Activated naive CD4-positive, alpha-beta T cell treated with anti-CD3 and anti-CD28 coated beads for 36 hours (primary cell): ENCODE measurements at regions of chr2 and their contacts with region 1.

Region 1: DNA sequence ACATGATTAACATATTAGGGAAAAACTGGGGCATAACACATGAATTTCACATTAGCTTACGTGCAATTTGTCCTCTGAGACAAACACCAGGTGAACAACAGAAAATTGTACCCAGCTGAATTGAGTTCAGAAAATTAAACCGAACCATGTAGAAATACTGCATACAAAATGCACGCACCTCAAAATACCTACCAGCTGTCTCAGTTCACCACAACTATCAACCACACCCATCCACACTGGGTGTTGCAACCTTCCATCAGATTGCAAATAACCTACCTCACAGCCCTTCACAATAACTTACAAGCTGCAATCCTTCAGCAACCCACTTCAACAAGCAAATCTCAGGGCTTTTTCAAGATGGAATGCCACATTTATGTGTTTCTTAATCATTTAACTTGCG is 55.9 kb downstream of the UNC50 start:
- DNase-seq: peak; percentile 78
- H3K4me3 Mint-ChIP-seq: peak overlapping the region; percentile 52
- H3K27ac Mint-ChIP-seq: peak overlapping the region; percentile 95
- H3K4me1 Mint-ChIP-seq: peaks cover 77% of the 10 kb centered on the region
- H3K27me3 Mint-ChIP-seq: no peaks in the 10 kb centered on the region

Region 2: GRCh38 chr2:98465456-98466226 is 198.7 kb before region 1 on chr2:
- CTCF ChIA-PET with region 1: no interaction called
- intact Hi-C with region 1: no loop called
- DNase-seq: peak; percentile 83
- H3K4me3 Mint-ChIP-seq: peak overlapping the region; percentile 66
- H3K27ac Mint-ChIP-seq: peak overlapping the region; percentile 95
- H3K4me1 Mint-ChIP-seq: peaks cover 88% of the 10 kb centered on the region
- H3K27me3 Mint-ChIP-seq: no peaks in the 10 kb centered on the region

Region 3: DNA sequence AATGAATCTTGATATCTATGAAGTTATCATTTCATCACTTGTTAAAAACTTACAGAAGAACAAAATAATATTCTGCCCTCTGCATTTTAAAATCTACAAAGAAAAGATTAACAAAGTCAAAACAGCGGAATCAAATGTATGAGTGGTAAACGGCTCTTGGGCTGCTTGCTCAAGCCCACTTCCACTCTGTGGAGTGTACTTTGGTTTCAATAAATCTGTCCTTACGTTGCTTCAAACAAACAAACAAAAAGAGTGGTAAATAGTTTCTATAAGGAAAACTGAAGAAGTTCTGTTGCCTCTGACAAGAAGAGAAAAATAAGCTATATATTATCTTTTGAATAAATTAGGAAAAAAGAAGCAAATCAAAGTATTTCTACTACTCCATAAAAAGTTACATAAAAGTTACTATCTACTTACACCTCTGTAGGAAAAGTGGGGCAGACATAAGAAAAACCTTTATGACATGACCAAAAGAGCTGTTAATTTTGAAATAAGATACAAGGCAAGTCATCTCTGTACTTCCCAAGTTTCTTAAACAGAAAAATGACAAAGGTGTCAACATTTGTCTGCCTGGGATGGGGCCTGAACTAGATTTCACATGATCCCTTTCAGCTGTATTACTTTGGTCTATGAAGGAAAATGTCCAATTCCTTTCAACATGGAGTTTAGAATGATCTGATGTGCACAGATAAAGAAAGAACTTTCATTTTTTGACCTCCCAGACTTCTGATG is 10.1 kb after region 1 on chr2:
- CTCF ChIA-PET with region 1: interaction called, 4 read pairs
- intact Hi-C with region 1: loop called (anchors 1 kb)
- DNase-seq: no peak
- H3K4me3 Mint-ChIP-seq: no peak overlapping the region
- H3K27ac Mint-ChIP-seq: peak overlapping the region; percentile 78
- H3K4me1 Mint-ChIP-seq: peaks cover 61% of the 10 kb centered on the region
- H3K27me3 Mint-ChIP-seq: no peaks in the 10 kb centered on the region

Region 4: GRCh38 chr2:98704499-98705332 is 40.4 kb after region 1 on chr2:
- CTCF ChIA-PET with region 1: no interaction called
- intact Hi-C with region 1: no loop called
- DNase-seq: no peak
- H3K4me3 Mint-ChIP-seq: no peak overlapping the region
- H3K27ac Mint-ChIP-seq: peak overlapping the region; percentile 43
- H3K4me1 Mint-ChIP-seq: peaks cover 74% of the 10 kb centered on the region
- H3K27me3 Mint-ChIP-seq: no peaks in the 10 kb centered on the region

Region 5: GRCh38 chr2:98869940-98870263 is 205.6 kb after region 1 on chr2:
- CTCF ChIA-PET with region 1: no interaction called
- intact Hi-C with region 1: no loop called
- DNase-seq: no peak
- H3K4me3 Mint-ChIP-seq: no peak overlapping the region
- H3K27ac Mint-ChIP-seq: no peak overlapping the region
- H3K4me1 Mint-ChIP-seq: peaks cover 11% of the 10 kb centered on the region
- H3K27me3 Mint-ChIP-seq: no peaks in the 10 kb centered on the region

Region 6: GRCh38 chr2:99154643-99155536 is 490.6 kb after region 1 on chr2 and contains the starts of genes LIPT1 and TSGA10:
- CTCF ChIA-PET with region 1: no interaction called
- intact Hi-C with region 1: no loop called
- DNase-seq: peak; percentile 95
- H3K4me3 Mint-ChIP-seq: no peak within 1 kb of the TSS
- H3K27ac Mint-ChIP-seq: no peak within 1 kb of the TSS
- H3K4me1 Mint-ChIP-seq: peaks cover 39% of the 10 kb centered on the region
- H3K27me3 Mint-ChIP-seq: no peaks in the 10 kb centered on the region
- total RNA-seq, gene LIPT1: 7.0 to 8.1 TPM
- total RNA-seq, gene TSGA10: 7.2 to 8.9 TPM